IMR-90 (cell line): ENCODE measurements at regions of chr1 and their contacts with region 1.

Region 1: GRCh38 chr1:113452921-113453770 is 62.8 kb downstream of the MAGI3 start:
- DNase-seq: peak; percentile 66
- ATAC-seq: peak; percentile 60
- H3K4me3 ChIP-seq: no peak overlapping the region
- H3K27ac ChIP-seq: no peak overlapping the region
- H3K4me1 ChIP-seq: peaks cover 2% of the 10 kb centered on the region
- H3K27me3 ChIP-seq: no peaks in the 10 kb centered on the region
- CTCF ChIP-seq: peak; percentile 55
- POLR2A ChIP-seq: no peak
- RAD21 ChIP-seq: peak; percentile 55

Region 2: GRCh38 chr1:113140588-113141446 is 312.3 kb before region 1 on chr1:
- CTCF ChIA-PET with region 1: no interaction called
- POLR2A ChIA-PET with region 1: no interaction called
- dilution Hi-C with region 1: no loop called
- in situ Hi-C with region 1: no loop called
- intact Hi-C with region 1: loop called (anchors 1 kb)
- DNase-seq: peak; percentile 65
- ATAC-seq: peak; percentile 84
- H3K4me3 ChIP-seq: no peak overlapping the region
- H3K27ac ChIP-seq: no peak overlapping the region
- H3K4me1 ChIP-seq: peaks cover 5% of the 10 kb centered on the region
- H3K27me3 ChIP-seq: no peaks in the 10 kb centered on the region
- CTCF ChIP-seq: peak; percentile 87
- POLR2A ChIP-seq: no peak
- RAD21 ChIP-seq: peak; percentile 92

Region 3: DNA sequence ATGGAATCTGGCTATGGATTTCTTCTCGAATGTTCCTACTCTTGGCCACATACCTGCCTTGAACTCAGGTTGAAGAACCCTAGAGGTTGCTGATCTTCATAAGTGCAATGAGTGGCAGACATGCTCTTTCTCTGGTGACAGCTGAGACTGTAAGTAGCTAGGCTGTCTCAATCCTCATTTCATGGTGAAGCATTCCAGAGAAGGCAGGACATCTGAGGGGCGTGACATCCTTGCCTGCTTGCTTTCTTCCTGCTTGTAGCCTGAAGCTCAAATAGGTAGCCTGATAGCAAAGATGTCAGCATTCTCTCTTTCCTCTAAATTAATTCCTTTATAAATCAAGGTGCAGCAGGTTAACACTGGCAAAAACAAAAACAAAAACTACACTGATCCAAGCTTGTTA is 177.5 kb before region 1 on chr1:
- CTCF ChIA-PET with region 1: no interaction called
- POLR2A ChIA-PET with region 1: interaction called, 16 read pairs
- dilution Hi-C with region 1: no loop called
- in situ Hi-C with region 1: no loop called
- intact Hi-C with region 1: no loop called
- DNase-seq: no peak
- ATAC-seq: no peak
- H3K4me3 ChIP-seq: no peak overlapping the region
- H3K27ac ChIP-seq: no peak overlapping the region
- H3K4me1 ChIP-seq: no peaks in the 10 kb centered on the region
- H3K27me3 ChIP-seq: peaks cover 3% of the 10 kb centered on the region; the same call in 1 of the 2 replicates
- CTCF ChIP-seq: no peak
- POLR2A ChIP-seq: no peak
- RAD21 ChIP-seq: no peak

Region 4: GRCh38 chr1:113859478-113860175 is 406.5 kb after region 1 on chr1:
- CTCF ChIA-PET with region 1: no interaction called
- POLR2A ChIA-PET with region 1: no interaction called
- dilution Hi-C with region 1: no loop called
- in situ Hi-C with region 1: no loop called
- intact Hi-C with region 1: no loop called
- DNase-seq: no peak
- ATAC-seq: no peak
- H3K4me3 ChIP-seq: no peak overlapping the region
- H3K27ac ChIP-seq: peak overlapping the region; percentile 59
- H3K4me1 ChIP-seq: peaks cover 10% of the 10 kb centered on the region
- H3K27me3 ChIP-seq: no peaks in the 10 kb centered on the region
- CTCF ChIP-seq: no peak
- POLR2A ChIP-seq: no peak
- RAD21 ChIP-seq: no peak